HCT116 (cell line): ENCODE measurements at regions of chr12 and their contacts with region 1.

Region 1: GRCh38 chr12:15899282-15899870 is 11.8 kb upstream of the DERA start:
- DNase-seq: no peak
- ATAC-seq: peak; percentile 75
- H3K4me3 ChIP-seq: no peak overlapping the region
- H3K27ac ChIP-seq: no peak overlapping the region
- H3K4me1 ChIP-seq: no peaks in the 10 kb centered on the region
- H3K27me3 ChIP-seq: no peaks in the 10 kb centered on the region
- CTCF ChIP-seq: peak; percentile 43 to 79 (median 54); a peak in 5 of 6 replicates
- POLR2A ChIP-seq: no peak
- RAD21 ChIP-seq: peak; percentile 59

Region 2: GRCh38 chr12:15532364-15532977 is 366.9 kb before region 1 on chr12:
- CTCF ChIA-PET with region 1: interaction called, 13 read pairs
- POLR2A ChIA-PET with region 1: no interaction called
- RAD21 ChIA-PET with region 1: interaction called in 1 of 2 experiments, 3 read pairs
- intact Hi-C with region 1: no loop called
- DNase-seq: peak; percentile 72
- ATAC-seq: peak; percentile 96
- H3K4me3 ChIP-seq: no peak overlapping the region
- H3K27ac ChIP-seq: no peak overlapping the region
- H3K4me1 ChIP-seq: peaks cover 0 to 4% of the 10 kb centered on the region in 2 experiments; a peak in 1 of 4 replicates
- H3K27me3 ChIP-seq: no peaks in the 10 kb centered on the region
- CTCF ChIP-seq: peak; percentile 62 to 68 (median 65); a peak in 5 of 6 replicates
- POLR2A ChIP-seq: no peak
- RAD21 ChIP-seq: peak; percentile 83

Region 3: GRCh38 chr12:15590180-15590826 is 309.1 kb before region 1 on chr12:
- CTCF ChIA-PET with region 1: no interaction called
- POLR2A ChIA-PET with region 1: no interaction called
- RAD21 ChIA-PET with region 1: no interaction called
- intact Hi-C with region 1: loop called (anchors 1 kb)
- DNase-seq: peak; percentile 60
- ATAC-seq: peak; percentile 87
- H3K4me3 ChIP-seq: peak overlapping the region; percentile 13 to 36; a peak in 2 of 4 replicates
- H3K27ac ChIP-seq: no peak overlapping the region
- H3K4me1 ChIP-seq: peaks cover 3 to 10% of the 10 kb centered on the region in 2 experiments; a peak in 3 of 4 replicates
- H3K27me3 ChIP-seq: no peaks in the 10 kb centered on the region
- CTCF ChIP-seq: peak; percentile 76 to 87 (median 86)
- POLR2A ChIP-seq: no peak
- RAD21 ChIP-seq: peak; percentile 98

Region 4: DNA sequence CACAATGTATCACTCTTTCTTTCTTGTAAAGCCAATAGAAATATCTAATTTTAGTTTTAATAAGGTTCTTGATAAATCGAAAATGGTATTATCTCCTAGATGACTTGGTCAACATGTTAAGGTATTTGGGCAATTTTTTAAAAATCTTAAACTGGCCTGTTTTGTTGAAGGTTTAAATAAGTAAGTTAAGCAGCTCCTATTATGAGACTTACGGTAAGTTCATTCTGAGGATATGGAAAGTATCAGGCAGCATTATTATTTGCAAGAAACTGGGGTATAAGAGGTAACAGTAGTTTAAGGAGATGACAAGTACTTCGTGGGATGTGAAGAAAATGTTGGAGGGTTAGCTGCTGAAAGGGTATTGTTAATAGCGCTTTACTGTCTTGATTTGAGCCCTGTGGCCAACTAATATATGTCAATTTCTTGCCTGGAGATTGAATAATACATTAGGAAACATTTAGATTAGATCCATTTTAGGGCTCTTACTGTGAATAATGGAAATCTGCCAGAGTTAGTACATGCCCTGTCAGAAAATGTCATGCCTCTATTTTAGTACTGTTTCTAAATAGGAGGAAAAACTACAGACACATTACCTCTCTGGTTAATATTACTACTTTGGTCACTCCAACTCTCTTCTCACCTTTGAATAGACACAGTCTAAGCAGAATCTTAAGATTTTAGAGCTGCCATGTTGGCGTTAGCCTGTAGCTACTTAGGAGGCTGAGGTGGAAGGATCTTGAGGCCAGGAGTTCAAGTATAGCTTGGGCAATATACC is 12.1 kb before region 1 on chr12:
- CTCF ChIA-PET with region 1: interaction called, 16 read pairs
- POLR2A ChIA-PET with region 1: interaction called, 4 read pairs
- RAD21 ChIA-PET with region 1: no interaction called
- intact Hi-C with region 1: no loop called
- DNase-seq: no peak
- ATAC-seq: no peak
- H3K4me3 ChIP-seq: no peak overlapping the region
- H3K27ac ChIP-seq: no peak overlapping the region
- H3K4me1 ChIP-seq: peaks cover 7 to 16% of the 10 kb centered on the region in 2 experiments
- H3K27me3 ChIP-seq: no peaks in the 10 kb centered on the region
- CTCF ChIP-seq: no peak
- POLR2A ChIP-seq: no peak
- RAD21 ChIP-seq: no peak

Region 5: GRCh38 chr12:15910864-15911721 is 11.7 kb after region 1 on chr12 and contains the start of gene DERA:
- CTCF ChIA-PET with region 1: interaction called, 26 read pairs
- POLR2A ChIA-PET with region 1: interaction called, 3 read pairs
- RAD21 ChIA-PET with region 1: no interaction called
- intact Hi-C with region 1: no loop called
- DNase-seq: peak; percentile 28
- ATAC-seq: peak; percentile 98
- H3K4me3 ChIP-seq: peak within 1 kb of the TSS; percentile 79 to 85
- H3K27ac ChIP-seq: peak within 1 kb of the TSS; percentile 70
- H3K4me1 ChIP-seq: peaks cover 8 to 22% of the 10 kb centered on the region in 2 experiments; a peak in 3 of 4 replicates
- H3K27me3 ChIP-seq: no peaks in the 10 kb centered on the region
- CTCF ChIP-seq: no peak
- POLR2A ChIP-seq: no peak
- RAD21 ChIP-seq: no peak
- total RNA-seq, gene DERA: 32.6 TPM